Psoas muscle (tissue), 8 donors: ENCODE measurements at regions of chr6 and their contacts with region 1.

Region 1: DNA sequence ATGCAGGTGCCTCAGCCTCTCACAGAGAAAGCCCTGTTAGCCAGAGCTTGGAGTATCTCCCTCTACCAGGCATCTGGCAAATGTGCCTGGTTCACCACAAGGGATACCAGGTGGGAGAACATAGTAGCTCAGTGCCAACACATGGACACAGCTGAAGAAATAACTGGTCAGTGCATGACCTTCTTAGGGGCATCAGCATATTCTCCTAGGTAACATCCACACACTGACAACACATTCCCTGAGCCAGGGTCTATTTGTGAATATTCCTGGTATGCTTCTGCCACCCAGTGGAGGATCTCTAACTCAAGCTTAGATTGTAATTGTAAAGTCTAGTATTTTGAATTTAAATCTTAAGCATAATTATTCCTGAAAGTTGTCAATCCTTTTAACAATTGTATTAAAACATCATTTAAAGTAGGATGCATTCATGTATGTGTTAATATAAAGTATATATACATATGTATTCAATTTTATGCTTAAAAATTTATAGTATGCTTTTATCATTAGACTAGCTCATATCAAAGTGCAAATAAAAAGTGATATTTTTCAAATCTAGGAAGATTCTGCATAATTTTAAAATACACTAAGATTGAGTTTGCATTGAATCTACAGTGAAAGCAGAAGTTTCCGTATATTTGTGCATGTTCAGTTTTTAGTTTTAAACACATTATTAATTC is 45.3 kb upstream of the COL21A1 start:
- DNase-seq: no peak
- ATAC-seq: peak; percentile 49 to 67 (median 60)
- H3K4me3 ChIP-seq: no peak overlapping the region
- H3K27ac ChIP-seq: no peak overlapping the region
- H3K4me1 ChIP-seq: no peaks in the 10 kb centered on the region
- H3K27me3 ChIP-seq: no peaks in the 10 kb centered on the region
- CTCF ChIP-seq: peak; percentile 57

Region 2: GRCh38 chr6:55276745-55277530 is 1015.7 kb before region 1 on chr6:
- intact Hi-C with region 1: loop called in 1 of 2 experiments (anchors 5 kb)
- DNase-seq: peak in 1 of 2 donors; percentile 44
- ATAC-seq: peak in 1 of 4 donors; percentile 55
- H3K4me3 ChIP-seq: no peak overlapping the region
- H3K27ac ChIP-seq: no peak overlapping the region
- H3K4me1 ChIP-seq: no peaks in the 10 kb centered on the region
- H3K27me3 ChIP-seq: no peaks in the 10 kb centered on the region
- CTCF ChIP-seq: peak; percentile 44

Region 3: DNA sequence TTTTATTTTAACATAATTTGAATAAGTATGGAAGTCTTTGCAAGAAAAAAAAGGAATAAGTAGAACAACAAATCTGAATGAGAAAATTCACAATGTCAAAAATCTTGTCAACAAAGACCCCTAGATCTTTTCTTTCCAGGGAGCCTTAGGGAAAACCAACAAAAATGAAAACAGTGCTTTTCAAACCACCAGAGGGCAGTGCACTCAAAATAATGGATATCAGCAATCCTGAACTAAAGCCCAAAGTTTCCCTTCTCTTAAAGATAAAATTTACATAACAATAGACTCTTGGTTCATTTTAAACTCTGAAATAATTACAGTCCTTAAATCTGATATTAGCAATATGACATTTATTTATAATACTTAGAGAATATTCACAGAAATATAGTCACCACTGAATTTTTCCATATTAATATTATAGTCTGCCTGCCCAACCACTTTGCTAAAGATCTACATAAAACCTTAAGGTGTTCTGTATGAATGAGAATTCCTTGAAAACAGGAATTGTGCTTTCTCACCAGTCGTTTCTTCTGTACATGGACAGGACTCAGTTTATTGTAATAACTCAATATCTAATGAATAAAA is 311.9 kb before region 1 on chr6:
- intact Hi-C with region 1: loop called (anchors 1 to 2 kb)
- DNase-seq: no peak
- ATAC-seq: no peak
- H3K4me3 ChIP-seq: no peak overlapping the region
- H3K27ac ChIP-seq: no peak overlapping the region
- H3K4me1 ChIP-seq: no peaks in the 10 kb centered on the region
- H3K27me3 ChIP-seq: no peaks in the 10 kb centered on the region
- CTCF ChIP-seq: peak; percentile 65

Region 4: DNA sequence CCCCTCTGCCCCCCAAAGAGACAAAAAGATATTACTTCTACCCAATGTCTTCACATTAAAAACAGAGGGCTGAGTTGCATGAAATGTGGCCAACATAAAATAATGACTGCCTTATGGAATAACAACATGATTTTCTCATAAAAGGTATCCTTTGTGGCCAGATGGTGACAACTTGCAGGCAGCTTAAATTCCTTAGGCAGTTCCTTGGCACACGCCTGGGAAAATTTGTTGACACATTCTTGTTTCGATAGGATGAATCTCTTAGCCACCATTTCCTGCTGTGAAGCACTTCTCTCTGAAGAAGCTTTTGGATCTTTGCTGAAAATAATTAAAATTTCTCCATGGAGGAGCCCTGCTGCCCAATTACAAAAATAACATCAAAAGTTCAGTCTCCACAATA is 63.8 kb after region 1 on chr6:
- intact Hi-C with region 1: no loop called
- DNase-seq: no peak
- ATAC-seq: no peak
- H3K4me3 ChIP-seq: no peak overlapping the region
- H3K27ac ChIP-seq: no peak overlapping the region
- H3K4me1 ChIP-seq: no peaks in the 10 kb centered on the region
- H3K27me3 ChIP-seq: no peaks in the 10 kb centered on the region
- CTCF ChIP-seq: no peak